CD8-positive, alpha-beta memory T cell (primary cell): ENCODE measurements at regions of chr2 and their contacts with region 1.

Region 1: GRCh38 chr2:45567974-45568789 is 42.9 kb downstream of the SRBD1 start:
- DNase-seq: peak in 2 of 5 donors; percentile 76 to 77
- H3K4me3 ChIP-seq: peak overlapping the region; percentile 55
- H3K4me3 Mint-ChIP-seq: peak overlapping the region; percentile 80 to 88 (median 85)
- H3K27ac ChIP-seq: peak overlapping the region; percentile 59
- H3K27ac Mint-ChIP-seq: peak overlapping the region; percentile 84 to 98 (median 94)
- H3K4me1 ChIP-seq: peaks cover 17% of the 10 kb centered on the region
- H3K4me1 Mint-ChIP-seq: peaks cover 25 to 44% (median 36%) of the 10 kb centered on the region in 3 donors
- H3K27me3 ChIP-seq: no peaks in the 10 kb centered on the region
- H3K27me3 Mint-ChIP-seq: no peaks in the 10 kb centered on the region

Region 2: DNA sequence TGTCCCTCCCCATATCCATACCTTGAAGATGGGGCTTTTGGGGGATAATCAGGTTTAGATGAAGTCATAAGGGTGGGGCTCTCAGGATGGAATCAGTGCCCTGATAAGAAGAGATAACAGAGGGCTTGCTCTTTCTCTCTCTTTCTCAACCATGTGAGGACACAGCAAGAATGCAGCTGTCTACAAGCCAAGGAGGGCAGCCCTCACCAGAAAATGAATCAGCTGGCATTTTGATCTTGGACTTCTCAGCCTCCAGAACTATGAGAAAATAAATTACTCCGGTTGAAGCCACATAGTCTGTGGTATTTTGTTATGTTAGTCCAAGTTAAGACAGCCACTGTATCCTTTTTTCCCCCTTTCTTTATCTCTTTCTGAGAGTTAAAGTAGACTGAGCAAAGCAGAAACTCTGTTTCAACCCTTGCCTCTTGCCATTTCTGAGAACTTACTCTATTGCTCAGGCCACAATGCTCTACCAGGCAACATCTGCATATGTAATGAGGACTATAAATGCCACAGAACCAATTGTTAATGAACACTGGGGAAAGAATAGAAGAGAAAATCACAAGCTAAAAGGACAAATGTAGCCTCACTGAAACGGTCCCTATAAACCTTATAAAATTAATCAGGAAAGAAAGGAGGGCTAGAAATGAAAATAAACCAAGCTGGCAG is 14.0 kb before region 1 on chr2:
- CTCF ChIA-PET with region 1: no interaction called
- POLR2A ChIA-PET with region 1: interaction called, 11 read pairs
- DNase-seq: no peak
- H3K4me3 ChIP-seq: no peak overlapping the region
- H3K4me3 Mint-ChIP-seq: no peak overlapping the region
- H3K27ac ChIP-seq: no peak overlapping the region
- H3K27ac Mint-ChIP-seq: peak overlapping the region in 4 of 8 donors; percentile 0 to 59 (median 28)
- H3K4me1 ChIP-seq: no peaks in the 10 kb centered on the region
- H3K4me1 Mint-ChIP-seq: peaks cover 2 to 26% (median 5%) of the 10 kb centered on the region in 3 donors
- H3K27me3 ChIP-seq: no peaks in the 10 kb centered on the region
- H3K27me3 Mint-ChIP-seq: no peaks in the 10 kb centered on the region

Region 3: DNA sequence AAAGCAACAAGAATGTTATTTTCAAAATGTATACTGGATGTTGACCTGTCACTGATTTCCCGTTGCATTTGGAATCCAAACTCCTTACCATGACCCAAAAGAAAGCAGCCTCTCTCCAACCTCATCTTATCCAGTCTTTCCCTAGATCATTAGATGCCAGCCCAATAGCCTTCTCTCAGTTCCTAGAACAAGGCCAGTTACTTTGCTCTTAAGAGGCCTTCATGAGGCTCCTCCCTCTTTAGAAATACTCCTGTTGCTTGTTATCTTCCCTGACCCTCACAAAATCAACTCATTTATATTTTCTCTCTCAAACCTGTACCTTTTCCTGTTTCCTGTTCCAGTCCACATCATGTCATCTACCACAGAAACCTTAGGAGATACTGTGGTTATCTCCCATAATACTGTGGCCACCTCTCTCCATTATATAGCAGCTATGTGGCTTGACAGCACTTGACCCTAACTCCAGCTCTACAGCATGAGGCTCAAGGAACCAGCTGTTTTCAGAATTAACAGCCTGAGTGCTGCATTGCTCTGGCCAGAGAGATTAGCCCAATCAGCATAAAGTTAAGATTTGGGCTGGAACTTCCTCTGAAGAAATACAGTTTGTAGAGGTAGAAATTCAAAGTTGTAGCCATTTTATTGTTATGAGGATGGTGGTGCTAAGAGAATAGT is 20.1 kb after region 1 on chr2:
- CTCF ChIA-PET with region 1: no interaction called
- POLR2A ChIA-PET with region 1: no interaction called
- DNase-seq: no peak
- H3K4me3 ChIP-seq: no peak overlapping the region
- H3K4me3 Mint-ChIP-seq: no peak overlapping the region
- H3K27ac ChIP-seq: no peak overlapping the region
- H3K27ac Mint-ChIP-seq: peak overlapping the region in 6 of 8 donors; percentile 18 to 83 (median 58)
- H3K4me1 ChIP-seq: no peaks in the 10 kb centered on the region
- H3K4me1 Mint-ChIP-seq: peaks cover 26 to 36% (median 29%) of the 10 kb centered on the region in 3 donors
- H3K27me3 ChIP-seq: no peaks in the 10 kb centered on the region
- H3K27me3 Mint-ChIP-seq: no peaks in the 10 kb centered on the region